ENCODE measurements at regions of chr1 and their contacts with region 1.

Region 1: DNA sequence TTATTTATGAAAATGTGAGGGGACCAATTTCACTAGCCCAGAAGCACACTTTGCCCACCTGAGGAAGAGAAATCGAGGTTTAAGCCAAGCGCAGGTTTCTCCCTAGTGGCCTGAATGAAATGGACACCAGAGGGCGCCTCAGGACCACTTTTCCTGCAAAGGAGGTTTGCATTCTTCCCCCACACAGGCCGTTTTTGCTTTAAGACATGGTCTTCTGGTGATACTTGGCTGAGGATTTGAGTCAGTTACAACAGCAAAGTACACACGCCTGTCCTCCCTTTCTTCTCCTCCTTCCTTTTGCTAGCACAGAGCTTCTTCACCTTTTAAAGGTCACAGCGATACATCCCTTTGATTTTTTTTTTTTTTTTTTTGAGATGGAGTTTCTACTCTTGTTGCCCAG is 5.4 kb downstream of the PLA2G2E start:
- DNase-seq: peak; percentile 76 to 84
- H3K4me3 ChIP-seq: no peak overlapping the region
- H3K4me3 Mint-ChIP-seq: no peak overlapping the region
- H3K27ac Mint-ChIP-seq: peak overlapping the region; percentile 64
- H3K4me1 ChIP-seq: peaks cover 9% of the 10 kb centered on the region; the same call in 1 of the 2 replicates
- H3K4me1 Mint-ChIP-seq: no peaks in the 10 kb centered on the region
- H3K27me3 ChIP-seq: no peaks in the 10 kb centered on the region
- H3K27me3 Mint-ChIP-seq: no peaks in the 10 kb centered on the region
- CTCF ChIP-seq: peak; percentile 71 to 88

Region 2: GRCh38 chr1:19698181-19698580 is 219.9 kb before region 1 on chr1:
- CTCF ChIA-PET with region 1: no interaction called
- POLR2A ChIA-PET with region 1: no interaction called
- intact Hi-C with region 1: no loop called
- DNase-seq: no peak
- H3K4me3 ChIP-seq: no peak overlapping the region
- H3K4me3 Mint-ChIP-seq: no peak overlapping the region
- H3K27ac Mint-ChIP-seq: no peak overlapping the region
- H3K4me1 ChIP-seq: no peaks in the 10 kb centered on the region
- H3K4me1 Mint-ChIP-seq: no peaks in the 10 kb centered on the region
- H3K27me3 ChIP-seq: no peaks in the 10 kb centered on the region
- H3K27me3 Mint-ChIP-seq: no peaks in the 10 kb centered on the region
- CTCF ChIP-seq: no peak

Region 3: GRCh38 chr1:19903600-19903999 is 14.5 kb before region 1 on chr1:
- CTCF ChIA-PET with region 1: no interaction called
- POLR2A ChIA-PET with region 1: no interaction called
- intact Hi-C with region 1: no loop called
- DNase-seq: no peak
- H3K4me3 ChIP-seq: no peak overlapping the region
- H3K4me3 Mint-ChIP-seq: no peak overlapping the region
- H3K27ac Mint-ChIP-seq: no peak overlapping the region
- H3K4me1 ChIP-seq: no peaks in the 10 kb centered on the region
- H3K4me1 Mint-ChIP-seq: no peaks in the 10 kb centered on the region
- H3K27me3 ChIP-seq: no peaks in the 10 kb centered on the region
- H3K27me3 Mint-ChIP-seq: no peaks in the 10 kb centered on the region
- CTCF ChIP-seq: no peak

Region 4: GRCh38 chr1:19946331-19946751 is 28.3 kb after region 1 on chr1:
- CTCF ChIA-PET with region 1: interaction called, 10 read pairs
- POLR2A ChIA-PET with region 1: no interaction called
- intact Hi-C with region 1: no loop called
- DNase-seq: peak; percentile 82 to 88
- H3K4me3 ChIP-seq: no peak overlapping the region
- H3K4me3 Mint-ChIP-seq: peak overlapping the region; percentile 54
- H3K27ac Mint-ChIP-seq: peak overlapping the region; percentile 87
- H3K4me1 ChIP-seq: peaks cover 29% of the 10 kb centered on the region
- H3K4me1 Mint-ChIP-seq: peaks cover 23% of the 10 kb centered on the region
- H3K27me3 ChIP-seq: no peaks in the 10 kb centered on the region
- H3K27me3 Mint-ChIP-seq: no peaks in the 10 kb centered on the region
- CTCF ChIP-seq: no peak

Region 5: DNA sequence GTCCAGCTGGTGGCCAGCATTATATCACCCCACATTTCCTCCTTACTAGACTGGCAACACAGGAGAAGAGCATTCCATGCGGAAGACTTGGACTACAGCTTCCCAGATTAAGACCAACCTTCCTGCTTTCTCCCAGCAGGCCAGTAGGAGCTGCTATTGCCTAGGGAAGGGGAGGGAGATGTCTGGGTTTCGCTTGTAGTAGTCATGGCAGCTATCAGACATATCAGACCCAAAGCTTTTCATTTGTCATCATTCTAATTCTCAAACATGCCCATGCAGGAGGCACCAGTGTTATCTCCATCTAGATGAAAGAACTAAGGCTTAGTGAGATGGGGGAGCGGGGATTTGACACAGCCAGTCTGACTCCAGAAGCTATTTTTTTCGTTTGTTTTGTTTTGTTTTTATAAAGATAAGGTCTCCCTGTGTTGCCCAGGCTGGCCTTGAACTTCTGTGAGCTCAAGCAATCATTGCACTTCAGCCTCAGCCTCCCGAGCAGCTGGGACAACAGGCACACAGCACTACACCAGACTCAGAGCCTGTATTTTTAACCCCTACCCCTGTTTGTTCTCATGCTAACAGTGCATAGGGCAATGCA is 56.9 kb after region 1 on chr1:
- CTCF ChIA-PET with region 1: interaction called, 9 read pairs
- POLR2A ChIA-PET with region 1: no interaction called
- intact Hi-C with region 1: loop called (anchors 1 kb)
- DNase-seq: peak; percentile 62 to 69
- H3K4me3 ChIP-seq: no peak overlapping the region
- H3K4me3 Mint-ChIP-seq: no peak overlapping the region
- H3K27ac Mint-ChIP-seq: peak overlapping the region; percentile 42
- H3K4me1 ChIP-seq: peaks cover 20% of the 10 kb centered on the region
- H3K4me1 Mint-ChIP-seq: peaks cover 8% of the 10 kb centered on the region
- H3K27me3 ChIP-seq: no peaks in the 10 kb centered on the region
- H3K27me3 Mint-ChIP-seq: no peaks in the 10 kb centered on the region
- CTCF ChIP-seq: peak; percentile 71 to 92

Region 6: GRCh38 chr1:20100632-20101355 is 182.7 kb after region 1 on chr1:
- CTCF ChIA-PET with region 1: no interaction called
- POLR2A ChIA-PET with region 1: no interaction called
- intact Hi-C with region 1: loop called (anchors 5 kb)
- DNase-seq: peak; percentile 32 to 35
- H3K4me3 ChIP-seq: no peak overlapping the region
- H3K4me3 Mint-ChIP-seq: no peak overlapping the region
- H3K27ac Mint-ChIP-seq: no peak overlapping the region
- H3K4me1 ChIP-seq: no peaks in the 10 kb centered on the region
- H3K4me1 Mint-ChIP-seq: no peaks in the 10 kb centered on the region
- H3K27me3 ChIP-seq: no peaks in the 10 kb centered on the region
- H3K27me3 Mint-ChIP-seq: no peaks in the 10 kb centered on the region
- CTCF ChIP-seq: peak; percentile 40 to 54

Region 7: DNA sequence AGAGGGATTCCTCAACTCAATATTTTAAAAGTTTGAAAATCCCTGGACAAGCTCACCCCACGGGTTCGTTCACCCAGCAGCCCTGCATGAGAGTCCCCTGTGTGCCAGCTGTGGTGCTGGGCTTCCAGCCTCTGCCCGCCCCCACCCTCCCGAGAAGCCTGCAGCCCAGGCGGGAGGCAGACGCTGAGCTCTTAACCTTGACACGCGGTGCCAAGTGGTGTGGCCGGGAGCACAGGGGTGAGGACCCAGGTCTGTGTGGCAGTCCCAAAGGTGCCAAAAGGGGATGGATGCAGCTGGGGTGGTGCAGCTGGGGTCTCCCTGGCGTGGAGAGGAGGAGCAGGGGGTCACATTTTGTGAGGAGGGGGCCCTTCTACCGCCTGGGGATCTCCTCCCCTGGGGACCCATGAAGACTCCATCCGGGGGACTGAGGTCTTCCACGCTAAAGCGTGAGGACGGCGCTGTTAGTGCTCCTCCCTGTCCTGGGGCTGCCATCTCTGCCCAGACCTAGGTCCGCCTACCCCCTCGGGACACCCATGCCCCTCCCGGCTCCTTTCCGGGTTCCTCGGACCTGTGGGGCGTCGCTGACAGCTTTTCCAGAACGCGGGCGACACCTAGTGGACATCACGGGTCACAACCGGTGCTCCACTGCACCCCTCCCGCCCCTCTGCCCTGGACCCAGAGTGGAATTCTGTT is 234.0 kb after region 1 on chr1:
- CTCF ChIA-PET with region 1: interaction called, 3 read pairs
- POLR2A ChIA-PET with region 1: no interaction called
- intact Hi-C with region 1: loop called (anchors 1 kb)
- DNase-seq: peak; percentile 81 to 85
- H3K4me3 ChIP-seq: 0 out of 2 replicates have a peak overlapping the region, but pooled peaks have one; percentile 10
- H3K4me3 Mint-ChIP-seq: peak overlapping the region; percentile 47
- H3K27ac Mint-ChIP-seq: peak overlapping the region; percentile 35
- H3K4me1 ChIP-seq: no peaks in the 10 kb centered on the region
- H3K4me1 Mint-ChIP-seq: no peaks in the 10 kb centered on the region
- H3K27me3 ChIP-seq: no peaks in the 10 kb centered on the region
- H3K27me3 Mint-ChIP-seq: no peaks in the 10 kb centered on the region
- CTCF ChIP-seq: peak; percentile 80 to 92

Region 8: DNA sequence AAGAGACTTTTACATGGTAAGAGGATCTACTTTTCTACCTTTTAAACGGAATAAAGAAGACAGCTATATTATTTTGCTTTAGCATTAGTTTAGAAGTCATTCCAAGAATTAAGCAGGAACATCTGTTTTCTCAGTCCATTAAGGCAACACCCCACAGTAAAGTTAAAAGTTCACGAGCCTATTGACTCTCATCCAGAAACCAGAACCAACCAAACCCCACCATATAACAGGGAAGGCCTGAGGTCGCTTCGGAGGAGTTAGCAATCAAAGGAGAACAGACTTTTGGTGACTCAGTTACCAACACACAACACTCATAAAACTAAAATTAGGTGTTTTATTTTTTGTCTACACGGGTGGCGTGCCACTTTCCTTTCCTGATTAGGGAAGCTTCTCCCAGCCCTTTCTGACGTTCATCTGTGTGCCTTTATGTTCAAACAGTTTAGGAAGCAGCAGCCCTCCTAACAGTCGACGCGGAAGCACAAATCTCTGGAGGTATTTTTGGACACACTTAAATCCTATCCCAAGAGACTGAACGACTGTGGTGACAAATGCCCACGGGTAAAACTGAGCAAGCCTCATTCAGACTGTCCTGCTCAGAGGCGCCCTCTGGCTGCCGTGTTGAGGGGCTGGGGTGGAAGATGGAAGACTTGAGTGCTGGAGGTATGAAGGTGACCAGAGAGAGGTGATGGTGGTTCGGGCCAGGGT is 276.9 kb after region 1 on chr1:
- CTCF ChIA-PET with region 1: interaction called, 3 read pairs
- POLR2A ChIA-PET with region 1: no interaction called
- intact Hi-C with region 1: loop called (anchors 1 kb)
- DNase-seq: peak; percentile 46 to 62
- H3K4me3 ChIP-seq: no peak overlapping the region
- H3K4me3 Mint-ChIP-seq: no peak overlapping the region
- H3K27ac Mint-ChIP-seq: no peak overlapping the region
- H3K4me1 ChIP-seq: no peaks in the 10 kb centered on the region
- H3K4me1 Mint-ChIP-seq: no peaks in the 10 kb centered on the region
- H3K27me3 ChIP-seq: no peaks in the 10 kb centered on the region
- H3K27me3 Mint-ChIP-seq: peaks cover 3% of the 10 kb centered on the region
- CTCF ChIP-seq: peak; percentile 54 to 65